Activated naive CD4-positive, alpha-beta T cell treated with anti-CD3 and anti-CD28 coated beads for 36 hours (primary cell): ENCODE measurements at regions of chr10 and their contacts with region 1.

Region 1: GRCh38 chr10:97210543-97210961 is 24.8 kb upstream of the SLIT1 start:
- DNase-seq: peak; percentile 86
- H3K4me3 Mint-ChIP-seq: no peak overlapping the region
- H3K27ac Mint-ChIP-seq: no peak overlapping the region
- H3K4me1 Mint-ChIP-seq: no peaks in the 10 kb centered on the region
- H3K27me3 Mint-ChIP-seq: peaks cover 2% of the 10 kb centered on the region

Region 2: GRCh38 chr10:96618653-96619052 is 591.9 kb before region 1 on chr10:
- CTCF ChIA-PET with region 1: no interaction called
- intact Hi-C with region 1: no loop called
- DNase-seq: no peak
- H3K4me3 Mint-ChIP-seq: no peak overlapping the region
- H3K27ac Mint-ChIP-seq: no peak overlapping the region
- H3K4me1 Mint-ChIP-seq: no peaks in the 10 kb centered on the region
- H3K27me3 Mint-ChIP-seq: no peaks in the 10 kb centered on the region

Region 3: DNA sequence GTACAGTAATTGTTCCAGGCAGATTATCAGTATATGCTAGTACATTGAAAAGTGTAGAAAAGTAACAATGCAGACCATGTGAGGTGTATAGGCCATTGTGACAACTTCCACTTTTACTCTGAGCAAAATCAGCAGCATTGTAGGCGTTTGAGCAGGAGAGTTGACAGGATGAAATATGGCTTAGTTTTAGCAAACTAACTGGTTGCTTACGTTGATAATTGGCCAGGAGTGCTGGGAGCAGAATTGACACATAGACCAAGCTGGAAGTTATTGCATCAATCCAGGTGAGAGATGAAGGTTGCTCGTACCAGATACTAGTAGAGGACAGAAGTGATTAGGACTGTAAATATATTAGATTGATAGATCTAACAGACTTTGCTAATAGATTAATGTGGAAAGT is 332.5 kb before region 1 on chr10:
- CTCF ChIA-PET with region 1: no interaction called
- intact Hi-C with region 1: no loop called
- DNase-seq: no peak
- H3K4me3 Mint-ChIP-seq: no peak overlapping the region
- H3K27ac Mint-ChIP-seq: no peak overlapping the region
- H3K4me1 Mint-ChIP-seq: peaks cover 51% of the 10 kb centered on the region
- H3K27me3 Mint-ChIP-seq: no peaks in the 10 kb centered on the region

Region 4: DNA sequence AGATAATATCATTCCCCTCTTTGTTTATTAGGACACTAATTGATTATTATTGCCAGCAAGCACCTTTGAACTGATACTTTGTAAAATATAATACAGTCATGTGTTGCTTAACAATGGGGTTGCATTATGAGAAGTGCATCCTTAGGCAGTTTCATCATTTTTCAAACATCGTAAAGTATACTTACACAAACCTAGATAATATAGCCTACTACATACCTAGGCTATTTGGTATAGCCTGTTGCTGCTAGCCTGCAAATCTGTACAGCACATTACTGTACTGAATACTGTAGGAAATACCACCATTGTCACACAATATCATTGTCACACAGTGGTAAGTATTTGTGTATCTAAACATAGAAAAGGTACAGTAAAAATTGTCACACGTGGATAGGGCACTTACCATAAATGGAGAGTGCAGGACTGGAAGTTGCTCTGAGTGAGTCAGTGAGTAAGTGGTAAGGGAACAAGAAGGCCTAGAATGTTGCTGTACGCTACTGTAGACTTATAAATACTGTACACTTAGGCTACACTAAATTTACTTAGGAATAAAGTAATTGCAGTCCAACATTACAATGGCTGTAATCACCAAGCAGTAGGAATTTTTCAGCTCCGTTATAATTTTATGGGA is 307.7 kb before region 1 on chr10:
- CTCF ChIA-PET with region 1: no interaction called
- intact Hi-C with region 1: loop called (anchors 10 kb)
- DNase-seq: no peak
- H3K4me3 Mint-ChIP-seq: no peak overlapping the region
- H3K27ac Mint-ChIP-seq: no peak overlapping the region
- H3K4me1 Mint-ChIP-seq: peaks cover 61% of the 10 kb centered on the region
- H3K27me3 Mint-ChIP-seq: no peaks in the 10 kb centered on the region

Region 5: GRCh38 chr10:97081621-97082235 is 128.8 kb before region 1 on chr10:
- CTCF ChIA-PET with region 1: interaction called, 213 read pairs
- intact Hi-C with region 1: loop called (anchors 2 kb)
- DNase-seq: peak; percentile 78
- H3K4me3 Mint-ChIP-seq: no peak overlapping the region
- H3K27ac Mint-ChIP-seq: no peak overlapping the region
- H3K4me1 Mint-ChIP-seq: no peaks in the 10 kb centered on the region
- H3K27me3 Mint-ChIP-seq: peaks cover 25% of the 10 kb centered on the region

Region 6: GRCh38 chr10:97157578-97158095 is 52.9 kb before region 1 on chr10:
- CTCF ChIA-PET with region 1: no interaction called
- intact Hi-C with region 1: no loop called
- DNase-seq: no peak
- H3K4me3 Mint-ChIP-seq: no peak overlapping the region
- H3K27ac Mint-ChIP-seq: no peak overlapping the region
- H3K4me1 Mint-ChIP-seq: no peaks in the 10 kb centered on the region
- H3K27me3 Mint-ChIP-seq: no peaks in the 10 kb centered on the region

Region 7: DNA sequence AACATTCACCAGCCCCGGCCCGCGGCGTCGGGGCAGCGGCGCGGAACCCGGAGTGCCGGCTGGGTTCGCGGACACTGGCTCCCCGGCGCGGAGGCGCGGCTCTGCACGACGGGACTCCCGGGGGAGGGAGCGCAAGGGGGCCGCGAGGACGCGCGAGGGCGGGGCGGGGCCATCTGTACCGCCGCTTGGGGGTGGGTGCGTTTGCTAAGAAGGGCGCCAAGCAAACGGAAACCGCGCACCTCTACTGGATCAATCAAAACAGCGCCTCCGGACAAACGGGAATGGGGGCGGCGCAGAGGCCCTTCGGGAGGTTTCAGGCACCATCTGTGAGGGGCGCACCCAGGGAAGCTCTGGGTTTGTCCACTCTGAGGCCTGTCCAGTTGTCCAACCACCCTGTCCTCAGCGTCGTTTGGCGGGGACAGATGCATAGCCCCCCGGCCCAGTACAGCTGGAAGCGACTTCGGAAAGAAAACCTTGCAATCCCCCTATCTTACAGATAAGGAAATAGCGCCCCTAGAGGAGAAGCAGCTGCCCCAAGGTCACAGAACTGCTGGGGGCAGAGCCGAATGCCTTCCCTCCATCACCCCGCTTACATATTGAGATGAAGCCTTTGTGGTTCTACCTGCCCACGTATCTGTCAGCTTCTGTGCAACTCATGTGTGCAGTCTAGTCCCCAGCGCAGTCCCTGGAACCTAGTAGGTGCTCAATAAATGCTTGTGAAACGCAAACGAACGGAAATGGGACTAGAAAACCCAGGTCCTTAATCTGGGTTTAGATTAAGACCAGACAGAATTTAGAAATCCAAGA is 14.1 kb before region 1 on chr10:
- CTCF ChIA-PET with region 1: interaction called, 170 read pairs
- intact Hi-C with region 1: no loop called
- DNase-seq: peak; percentile 67
- H3K4me3 Mint-ChIP-seq: peak overlapping the region; percentile 65
- H3K27ac Mint-ChIP-seq: no peak overlapping the region
- H3K4me1 Mint-ChIP-seq: peaks cover 7% of the 10 kb centered on the region
- H3K27me3 Mint-ChIP-seq: peaks cover 19% of the 10 kb centered on the region

Region 8: GRCh38 chr10:97234400-97234799 is 23.8 kb after region 1 on chr10:
- CTCF ChIA-PET with region 1: interaction called, 41 read pairs
- intact Hi-C with region 1: loop called (anchors 1 kb)
- DNase-seq: no peak
- H3K4me3 Mint-ChIP-seq: no peak overlapping the region
- H3K27ac Mint-ChIP-seq: no peak overlapping the region
- H3K4me1 Mint-ChIP-seq: peaks cover 19% of the 10 kb centered on the region
- H3K27me3 Mint-ChIP-seq: no peaks in the 10 kb centered on the region

Region 9: GRCh38 chr10:97292097-97292862 is 81.7 kb after region 1 on chr10 and contains the start of gene ARHGAP19:
- CTCF ChIA-PET with region 1: no interaction called
- intact Hi-C with region 1: no loop called
- DNase-seq: peak; percentile 98
- H3K4me3 Mint-ChIP-seq: peak within 1 kb of the TSS; percentile 91
- H3K27ac Mint-ChIP-seq: peak within 1 kb of the TSS; percentile 88
- H3K4me1 Mint-ChIP-seq: peaks cover 23% of the 10 kb centered on the region
- H3K27me3 Mint-ChIP-seq: no peaks in the 10 kb centered on the region
- total RNA-seq, gene ARHGAP19: 76.7 to 91.9 TPM